AG04450 (cell line): ENCODE measurements at regions of chr7 and their contacts with region 1.

Region 1: DNA sequence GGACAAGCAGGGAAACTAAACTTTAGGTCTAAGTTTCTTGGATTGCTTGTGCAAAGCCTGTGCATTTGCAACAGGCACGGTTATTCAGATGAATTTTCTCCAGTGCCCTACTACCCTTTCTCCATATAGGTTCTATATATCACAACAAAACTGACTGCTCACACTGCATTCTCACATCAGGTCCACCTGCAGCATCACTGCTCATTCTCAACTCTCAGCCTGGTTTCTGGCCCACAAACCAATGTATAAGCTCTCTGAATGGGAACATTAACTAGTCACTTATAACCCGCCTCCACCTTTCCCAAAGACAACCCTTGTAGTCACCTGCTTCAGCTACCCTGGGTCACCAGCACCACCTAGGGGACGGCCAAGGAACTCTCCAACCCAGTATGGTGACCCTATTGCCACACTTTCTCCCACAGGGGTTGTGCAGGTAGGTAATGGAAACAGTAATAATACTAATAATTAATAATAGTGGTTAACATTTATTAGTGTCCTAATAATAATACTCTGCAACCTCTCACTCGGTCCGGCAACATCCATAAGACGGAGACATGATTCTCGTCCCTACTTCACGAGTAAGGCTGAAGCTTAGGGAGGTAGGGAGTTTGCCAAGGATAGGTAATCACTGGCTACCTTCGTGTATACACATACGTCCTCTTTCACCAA is 97.3 kb downstream of the CLEC2L start:
- DNase-seq: no peak
- H3K4me3 ChIP-seq: no peak overlapping the region
- H3K27ac ChIP-seq: no peak overlapping the region
- H3K27me3 ChIP-seq: no peaks in the 10 kb centered on the region
- CTCF ChIP-seq: peak; percentile 65

Region 2: GRCh38 chr7:139588632-139589031 is 32.2 kb before region 1 on chr7:
- CTCF ChIA-PET with region 1: interaction called, 12 read pairs
- POLR2A ChIA-PET with region 1: no interaction called
- DNase-seq: peak; percentile 72
- H3K4me3 ChIP-seq: no peak overlapping the region
- H3K27ac ChIP-seq: peak overlapping the region; percentile 61
- H3K27me3 ChIP-seq: no peaks in the 10 kb centered on the region
- CTCF ChIP-seq: no peak

Region 3: DNA sequence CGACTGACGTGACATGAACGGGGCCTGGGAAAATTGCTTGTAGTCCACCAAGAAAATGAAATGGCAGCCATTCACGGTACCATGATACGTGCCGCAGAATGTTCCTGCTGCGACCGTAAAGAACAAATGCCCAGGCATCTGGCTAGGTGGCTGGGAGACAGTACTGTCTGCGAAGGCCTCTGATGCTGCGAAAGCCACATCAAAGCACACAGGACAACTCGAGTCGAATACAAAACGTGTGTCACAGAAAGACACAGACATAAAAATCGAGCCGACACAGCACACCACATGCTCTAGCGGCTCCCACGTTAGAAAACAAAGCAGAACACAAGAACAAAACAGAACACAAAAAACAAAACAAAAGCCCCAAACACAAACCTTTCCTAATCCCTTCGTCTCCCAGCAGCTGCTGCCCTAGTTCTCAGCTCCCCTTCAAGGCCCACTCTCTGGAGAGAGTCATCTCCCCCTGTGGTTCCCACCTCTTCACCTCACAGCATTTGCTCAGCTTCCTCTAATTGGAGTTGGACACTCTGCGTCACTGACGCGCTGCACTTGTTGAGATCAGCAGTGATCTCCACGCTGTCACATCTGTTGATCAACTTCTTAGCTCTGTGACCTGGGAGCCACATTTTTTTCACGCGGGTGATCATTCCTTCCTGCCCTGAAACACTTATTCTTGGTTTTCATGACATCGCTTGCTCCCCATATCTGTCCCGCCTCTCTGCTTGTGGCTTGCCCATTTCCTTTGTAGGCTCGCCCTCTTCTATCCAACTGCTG is 14.9 kb after region 1 on chr7:
- CTCF ChIA-PET with region 1: interaction called, 16 read pairs
- POLR2A ChIA-PET with region 1: no interaction called
- DNase-seq: no peak
- H3K4me3 ChIP-seq: no peak overlapping the region
- H3K27ac ChIP-seq: no peak overlapping the region
- H3K27me3 ChIP-seq: no peaks in the 10 kb centered on the region
- CTCF ChIP-seq: no peak

Region 4: DNA sequence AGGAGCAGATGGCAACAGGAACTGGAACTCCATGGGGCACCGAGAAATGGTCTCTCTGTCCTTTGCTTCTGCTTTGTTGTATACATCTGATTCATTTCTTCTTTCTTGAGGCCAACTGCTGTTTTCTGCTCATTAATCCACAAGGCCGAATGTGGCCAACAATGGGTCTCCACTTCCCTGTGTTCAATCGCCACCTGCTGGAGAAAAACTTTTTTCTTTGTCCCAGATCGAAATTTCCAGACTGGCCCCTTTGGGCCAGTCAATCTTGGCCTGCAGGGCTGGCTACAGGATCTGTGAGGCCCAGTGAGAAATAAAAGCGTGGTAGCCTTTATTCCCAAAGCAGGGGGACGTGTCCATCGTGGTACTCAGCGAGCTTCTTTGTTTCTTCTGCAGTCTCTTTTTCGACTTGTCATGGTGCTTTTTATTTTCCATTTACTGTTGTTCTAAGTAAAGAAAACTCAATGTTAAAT is 383.1 kb after region 1 on chr7:
- CTCF ChIA-PET with region 1: interaction called, 116 read pairs
- POLR2A ChIA-PET with region 1: interaction called, 3 read pairs
- DNase-seq: peak; percentile 56
- H3K4me3 ChIP-seq: no peak overlapping the region
- H3K27ac ChIP-seq: no peak overlapping the region
- H3K27me3 ChIP-seq: no peaks in the 10 kb centered on the region
- CTCF ChIP-seq: peak; percentile 71